Natural killer cell (primary cell): ENCODE measurements at regions of chrX and their contacts with region 1.

Region 1: DNA sequence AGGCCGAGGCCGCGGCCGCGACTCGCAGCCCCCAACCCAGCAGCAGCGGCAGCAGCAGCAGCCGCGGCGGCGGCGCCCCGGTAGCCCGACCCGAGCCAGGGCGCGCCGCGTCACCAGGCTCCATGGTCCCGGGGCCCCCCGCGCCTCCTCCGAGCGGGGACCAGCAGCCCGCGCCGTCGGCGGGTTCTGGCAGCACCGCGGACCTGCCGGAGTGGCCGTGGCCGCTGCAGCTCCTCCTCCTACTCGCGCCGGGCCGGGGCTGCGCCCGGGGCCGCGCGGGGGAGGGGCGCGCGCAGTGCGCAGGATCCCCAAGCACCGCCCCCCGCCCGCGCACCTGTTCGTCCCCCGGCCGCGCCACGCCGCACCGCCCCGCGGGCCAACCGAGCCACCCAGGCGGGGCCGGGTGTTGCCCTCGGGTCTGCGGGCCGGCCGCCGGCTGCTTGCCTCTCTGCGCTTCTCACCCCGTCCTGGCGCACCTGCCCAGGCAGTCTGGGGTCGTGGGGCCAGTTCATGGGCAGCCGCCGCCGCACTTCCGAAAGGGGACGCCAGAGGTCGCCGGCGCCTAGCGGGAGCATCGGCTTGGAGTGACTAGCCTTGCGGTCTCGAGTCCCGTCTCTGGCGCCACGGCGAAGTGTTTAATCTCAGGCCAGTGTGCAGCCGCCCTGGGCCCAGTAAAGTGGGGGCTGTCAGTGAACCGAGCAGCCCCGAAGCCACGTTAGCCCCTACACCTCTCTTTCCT is at the start of gene SLC9A7:
- DNase-seq: peak; percentile 66 to 81
- ATAC-seq: peak; percentile 87 to 89 (median 89)
- H3K4me3 ChIP-seq: peak within 1 kb of the TSS; percentile 51
- H3K4me3 Mint-ChIP-seq: peak within 1 kb of the TSS; percentile 85
- H3K27ac ChIP-seq: peak within 1 kb of the TSS; percentile 43
- H3K27ac Mint-ChIP-seq: peak within 1 kb of the TSS in 1 of 2 donors; percentile 45
- H3K4me1 ChIP-seq: peaks cover 16% of the 10 kb centered on the region
- H3K4me1 Mint-ChIP-seq: peaks cover 6 to 7% of the 10 kb centered on the region in 2 donors
- H3K27me3 ChIP-seq: no peaks in the 10 kb centered on the region
- H3K27me3 Mint-ChIP-seq: peaks cover 4 to 29% of the 10 kb centered on the region in 2 donors
- CTCF ChIP-seq: peak; percentile 66
- total RNA-seq, gene SLC9A7: 0.39 to 1.1 (median 0.75) TPM

Region 2: GRCh38 chrX:46978341-46979291 is 219.5 kb after region 1 on chrX:
- intact Hi-C with region 1: loop called (anchors 2 kb)
- DNase-seq: peak; percentile 48 to 79
- ATAC-seq: peak; percentile 70 to 89 (median 72)
- H3K4me3 ChIP-seq: no peak overlapping the region
- H3K4me3 Mint-ChIP-seq: no peak overlapping the region
- H3K27ac ChIP-seq: no peak overlapping the region
- H3K27ac Mint-ChIP-seq: no peak overlapping the region
- H3K4me1 ChIP-seq: no peaks in the 10 kb centered on the region
- H3K4me1 Mint-ChIP-seq: no peaks in the 10 kb centered on the region
- H3K27me3 ChIP-seq: no peaks in the 10 kb centered on the region
- H3K27me3 Mint-ChIP-seq: peaks cover 10 to 36% of the 10 kb centered on the region in 2 donors
- CTCF ChIP-seq: peak; percentile 55

Region 3: DNA sequence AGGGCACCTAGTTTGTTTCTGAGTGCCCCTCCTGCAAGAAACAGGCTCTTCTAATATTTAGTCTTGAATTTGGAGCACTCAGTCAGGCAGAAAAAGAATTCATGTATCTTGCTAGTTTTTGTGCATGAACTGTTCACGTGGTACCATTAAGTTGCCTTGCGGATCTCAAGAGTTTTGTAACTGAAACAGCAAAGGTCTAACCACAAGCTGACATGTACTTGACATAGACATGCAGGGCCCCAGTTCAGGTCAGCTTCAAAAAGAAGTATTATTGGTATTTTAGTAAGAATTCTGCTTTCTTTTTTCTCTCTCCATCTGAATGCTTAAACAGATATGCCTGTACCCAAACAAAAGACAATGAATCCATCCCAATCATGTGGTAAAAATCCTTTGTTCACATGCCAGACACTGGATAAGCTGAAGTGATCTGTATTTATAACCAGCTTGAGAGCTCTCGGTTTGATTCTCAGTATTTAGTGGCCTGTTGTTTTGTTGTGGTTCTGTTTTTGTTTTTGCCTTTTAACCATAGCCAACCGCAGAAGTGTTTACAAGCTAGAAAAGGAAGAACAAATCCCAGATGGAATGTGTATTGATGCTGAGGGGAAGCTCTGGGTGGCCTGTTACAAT is 332.2 kb after region 1 on chrX:
- intact Hi-C with region 1: no loop called
- DNase-seq: no peak
- ATAC-seq: peak in 1 of 3 donors; percentile 32
- H3K4me3 ChIP-seq: no peak overlapping the region
- H3K4me3 Mint-ChIP-seq: no peak overlapping the region
- H3K27ac ChIP-seq: no peak overlapping the region
- H3K27ac Mint-ChIP-seq: peak overlapping the region in 1 of 2 donors; percentile 19
- H3K4me1 ChIP-seq: no peaks in the 10 kb centered on the region
- H3K4me1 Mint-ChIP-seq: peaks cover 0 to 5% of the 10 kb centered on the region in 2 donors
- H3K27me3 ChIP-seq: no peaks in the 10 kb centered on the region
- H3K27me3 Mint-ChIP-seq: no peaks in the 10 kb centered on the region
- CTCF ChIP-seq: no peak